Posterior vena cava (tissue), 2 donors: ENCODE measurements at regions of chr15 and their contacts with region 1.

Region 1: GRCh38 chr15:46778875-46779274 is 938.4 kb upstream of the SEMA6D start:
- DNase-seq: no peak

Region 2: DNA sequence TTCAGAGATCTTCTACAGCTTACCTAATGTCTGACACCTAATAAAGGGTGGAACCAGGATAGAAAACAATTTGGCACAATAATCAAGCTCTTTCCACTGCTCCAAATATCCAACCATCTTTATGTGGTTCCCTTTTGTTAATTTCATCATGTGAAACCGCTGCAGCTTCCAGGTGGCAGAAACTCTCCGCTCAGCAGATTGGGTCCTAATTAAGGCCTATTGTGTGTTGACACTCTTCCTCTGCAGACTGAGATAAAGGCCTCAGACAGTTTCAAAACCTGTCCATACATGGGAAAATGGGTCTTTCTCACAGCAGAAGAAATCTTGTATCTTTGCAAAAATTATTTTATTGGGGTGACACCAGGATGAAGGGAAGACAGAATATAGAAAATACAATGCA is 63.9 kb before region 1 on chr15:
- intact Hi-C with region 1: loop called in 1 of 2 experiments (anchors 2 kb)
- DNase-seq: no peak